ENCODE measurements at regions of chr5 and their contacts with region 1.

Region 1: GRCh38 chr5:170225326-170226128 is 7.3 kb upstream of the C5orf58 start:
- H3K4me3 Mint-ChIP-seq: no peak overlapping the region
- H3K27ac Mint-ChIP-seq: no peak overlapping the region
- H3K4me1 Mint-ChIP-seq: no peaks in the 10 kb centered on the region
- H3K27me3 Mint-ChIP-seq: peaks cover 3% of the 10 kb centered on the region

Region 2: DNA sequence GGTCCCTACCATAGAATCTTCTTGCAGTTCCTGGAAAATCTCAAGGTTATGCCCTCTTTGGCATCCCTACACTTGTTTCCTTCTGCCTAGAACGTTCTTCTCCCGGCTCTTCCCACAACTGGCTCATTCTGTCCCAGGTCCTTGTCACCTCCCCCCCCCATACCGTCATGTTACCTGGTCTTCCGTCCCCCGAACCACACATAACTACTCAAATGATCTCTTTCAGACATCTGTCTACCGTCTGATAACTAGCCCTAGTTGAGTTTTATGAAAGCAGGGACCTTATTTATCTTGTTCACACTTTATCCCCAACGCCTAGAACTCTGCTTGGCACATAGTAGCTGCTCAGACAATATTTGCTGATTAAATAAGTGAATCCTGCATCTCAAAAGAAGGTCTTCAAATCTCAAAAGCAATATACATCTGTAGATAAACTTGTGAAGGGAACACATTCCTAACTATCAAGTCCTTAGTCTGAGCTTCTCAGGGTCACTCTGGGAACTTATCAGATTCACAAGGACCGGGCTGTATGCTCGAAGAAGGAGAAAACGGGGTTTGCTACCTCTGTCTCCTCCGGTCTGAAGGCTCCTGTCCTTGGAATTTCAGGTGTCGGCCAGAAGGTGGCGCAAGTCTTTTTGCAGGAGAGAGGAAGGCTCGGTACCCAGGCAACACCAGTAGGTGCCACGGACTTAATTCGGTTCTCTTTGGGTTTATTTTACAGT is 42.1 kb after region 1 on chr5:
- intact Hi-C with region 1: no loop called
- H3K4me3 Mint-ChIP-seq: no peak overlapping the region
- H3K27ac Mint-ChIP-seq: peak overlapping the region; percentile 20
- H3K4me1 Mint-ChIP-seq: peaks cover 63% of the 10 kb centered on the region
- H3K27me3 Mint-ChIP-seq: no peaks in the 10 kb centered on the region

Region 3: DNA sequence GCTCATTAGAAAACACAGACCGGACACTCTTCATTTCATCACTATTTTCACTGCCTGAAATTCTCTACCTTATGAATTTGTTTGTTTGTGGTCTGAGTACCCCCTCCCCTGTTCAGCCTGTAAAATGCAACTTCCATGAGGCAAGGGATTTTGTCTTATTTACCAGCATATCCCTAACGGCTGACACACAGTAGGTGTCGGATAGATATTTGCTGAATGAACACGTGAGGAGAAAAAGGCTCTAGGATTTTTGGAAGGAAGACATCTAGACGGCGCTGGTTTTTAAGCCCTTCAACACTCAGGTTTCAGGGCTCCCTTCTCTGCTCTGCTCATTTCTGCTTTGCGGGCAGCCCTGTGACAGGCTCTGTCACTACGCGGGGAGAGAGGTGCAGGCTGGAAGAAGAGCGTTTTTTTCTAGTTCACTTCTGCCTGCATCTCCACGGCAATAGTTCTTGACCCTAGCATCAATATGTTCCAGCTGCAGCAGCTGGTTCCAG is 122.7 kb after region 1 on chr5:
- intact Hi-C with region 1: loop called (anchors 5 kb)
- H3K4me3 Mint-ChIP-seq: no peak overlapping the region
- H3K27ac Mint-ChIP-seq: peak overlapping the region; percentile 47
- H3K4me1 Mint-ChIP-seq: peaks cover 51% of the 10 kb centered on the region
- H3K27me3 Mint-ChIP-seq: peaks cover 8% of the 10 kb centered on the region

Region 4: GRCh38 chr5:170368586-170368985 is 143.1 kb after region 1 on chr5:
- intact Hi-C with region 1: no loop called
- H3K4me3 Mint-ChIP-seq: no peak overlapping the region
- H3K27ac Mint-ChIP-seq: no peak overlapping the region
- H3K4me1 Mint-ChIP-seq: peaks cover 55% of the 10 kb centered on the region
- H3K27me3 Mint-ChIP-seq: no peaks in the 10 kb centered on the region

Region 5: DNA sequence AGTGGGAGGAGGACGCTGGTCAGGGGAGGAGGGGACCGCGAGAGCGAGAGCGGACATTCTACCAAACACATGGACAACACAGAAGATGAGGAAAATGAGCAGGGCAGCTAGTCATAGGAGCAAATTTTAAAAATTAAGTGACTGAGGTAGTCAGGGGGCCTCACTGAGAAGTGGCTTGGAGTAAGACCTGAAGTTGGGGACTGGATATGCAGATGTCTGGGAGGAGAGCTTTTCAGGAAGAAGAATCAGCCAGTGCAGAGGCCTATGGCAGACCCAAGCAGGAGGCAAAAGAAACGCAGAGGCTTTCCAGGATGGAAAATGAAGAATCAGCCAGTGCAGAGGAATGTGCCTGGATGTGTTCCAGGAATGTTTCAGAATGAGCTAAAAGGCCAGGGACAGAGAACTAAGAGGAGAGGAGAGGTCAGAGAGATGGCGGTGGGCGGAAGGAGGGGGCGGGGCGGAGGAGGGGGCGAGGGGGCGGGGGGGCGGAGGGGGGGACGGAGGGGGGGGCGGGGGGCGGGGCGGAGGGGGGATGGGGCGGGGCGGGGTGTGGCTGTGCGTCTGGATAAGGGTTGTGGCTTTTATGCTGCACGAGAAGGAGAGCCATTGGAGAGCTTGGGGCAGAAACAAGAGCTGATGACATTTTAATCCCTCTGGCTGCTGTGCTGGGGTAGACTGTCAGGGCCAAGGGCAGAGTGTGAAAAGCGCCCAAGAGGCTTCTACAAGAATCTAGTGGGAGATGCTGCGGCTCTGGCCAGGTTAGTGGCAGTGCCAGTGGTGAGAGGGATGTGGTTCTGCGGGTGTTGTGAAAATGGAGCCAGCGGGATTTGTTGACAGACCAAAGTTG is 407.9 kb after region 1 on chr5:
- intact Hi-C with region 1: loop called (anchors 5 kb)
- H3K4me3 Mint-ChIP-seq: peak overlapping the region; percentile 51
- H3K27ac Mint-ChIP-seq: peak overlapping the region; percentile 9
- H3K4me1 Mint-ChIP-seq: peaks cover 27% of the 10 kb centered on the region
- H3K27me3 Mint-ChIP-seq: peaks cover 41% of the 10 kb centered on the region

Measured in dendritic cell treated with granulocyte-macrophage colony-stimulating factor and Interleukin-4, amounts not matched to agents 40 ng/mL and 50 ng/mL, for 4 days (primary cell).